T-cell (primary cell): ENCODE measurements at regions of chr9 and their contacts with region 1.

Region 1: DNA sequence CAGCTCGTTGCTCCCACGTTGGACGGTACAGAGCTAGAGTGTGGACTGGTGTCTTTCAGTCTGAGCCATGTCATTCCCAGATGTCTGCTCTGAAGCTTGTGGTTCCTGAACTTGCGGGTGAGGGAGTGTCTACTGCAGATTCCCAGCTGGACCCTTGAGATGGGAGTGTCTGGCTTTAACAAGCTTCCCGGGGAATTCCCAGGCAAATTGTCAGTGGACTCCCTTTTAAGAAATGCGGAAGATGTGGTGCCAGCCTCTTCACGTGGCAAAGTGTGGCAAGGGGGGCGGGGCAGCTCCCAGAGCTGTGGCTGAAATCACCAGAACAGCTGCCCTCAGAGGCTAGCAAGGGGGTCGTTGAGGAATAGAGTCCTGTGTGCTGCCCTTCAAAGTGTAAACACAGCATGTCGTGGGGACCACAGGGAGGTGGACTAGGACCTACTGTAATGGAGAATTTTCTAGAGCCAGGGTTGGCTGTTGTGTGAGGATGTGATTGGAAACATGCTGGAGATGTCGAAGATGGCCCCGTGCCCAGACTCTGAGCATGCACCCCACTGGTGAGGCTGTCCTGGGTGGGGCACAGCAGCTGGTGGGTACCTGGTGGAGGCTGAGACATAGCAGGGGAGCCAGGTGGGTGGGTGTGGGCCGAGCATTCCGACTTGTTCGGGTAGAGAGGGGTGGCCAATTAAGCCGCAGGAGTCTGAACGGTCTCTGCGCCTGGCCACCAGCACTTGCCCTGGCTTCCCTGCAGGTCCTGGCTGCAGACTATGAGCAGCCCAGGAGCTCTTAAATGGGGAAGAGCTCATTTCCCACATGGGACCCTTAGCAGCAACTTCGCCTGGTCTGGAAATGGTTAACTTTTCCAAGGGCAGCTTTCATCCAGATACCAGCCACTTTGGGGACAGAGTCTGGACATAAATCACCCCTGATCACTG is 37.4 kb downstream of the PRRX2 start:
- DNase-seq: no peak
- ATAC-seq: no peak
- H3K4me3 ChIP-seq: no peak overlapping the region
- H3K4me3 Mint-ChIP-seq: no peak overlapping the region
- H3K27ac ChIP-seq: no peak overlapping the region
- H3K27ac Mint-ChIP-seq: no peak overlapping the region
- H3K4me1 ChIP-seq: peaks cover 0 to 4% of the 10 kb centered on the region in 2 experiments
- H3K4me1 Mint-ChIP-seq: peaks cover 0 to 2% (median 0%) of the 10 kb centered on the region in 3 donors
- H3K27me3 ChIP-seq: peaks cover 2 to 36% of the 10 kb centered on the region in 2 experiments
- H3K27me3 Mint-ChIP-seq: peaks cover 15 to 38% of the 10 kb centered on the region in 2 donors

Region 2: DNA sequence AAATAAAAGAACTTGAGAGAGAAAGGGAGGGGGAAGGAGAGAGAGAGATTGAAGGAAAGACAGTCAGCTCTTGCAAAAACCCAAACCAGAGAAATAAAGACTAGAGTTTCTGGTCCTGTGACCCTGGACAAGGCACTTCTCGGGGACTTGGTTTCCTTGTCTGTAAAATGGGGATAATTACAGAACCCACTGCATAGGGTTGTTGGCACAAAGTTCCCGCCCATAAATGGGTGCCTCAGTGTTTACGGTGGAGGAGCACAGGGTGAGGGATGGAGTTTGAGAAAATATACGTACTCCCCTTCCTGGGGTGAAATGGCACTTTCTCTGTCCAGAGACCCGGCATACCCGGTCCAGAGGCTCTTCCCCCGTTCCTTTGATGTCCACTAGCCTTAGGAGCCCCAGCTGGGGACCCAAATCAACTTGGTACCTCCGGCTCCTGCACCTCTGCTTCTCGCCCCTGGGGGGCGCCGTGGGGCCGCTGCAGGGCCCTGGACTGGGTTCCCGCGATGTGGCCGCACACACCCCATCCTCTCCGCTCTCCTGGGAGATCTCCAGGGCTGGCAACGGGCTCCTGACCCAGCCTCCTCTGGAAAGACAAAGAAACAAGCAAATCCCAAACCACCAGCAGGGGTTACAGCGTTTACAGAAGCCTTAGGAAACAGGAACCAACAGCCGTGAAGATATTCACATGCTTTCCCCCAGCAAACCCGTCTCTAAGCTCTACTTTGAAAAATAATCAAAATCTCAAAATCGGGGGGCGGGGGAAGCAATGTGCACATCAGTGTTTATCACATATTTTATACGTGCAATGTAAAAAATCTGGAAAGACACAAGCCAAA is 23.7 kb after region 1 on chr9:
- CTCF ChIA-PET with region 1: no interaction called
- POLR2A ChIA-PET with region 1: interaction called, 4 to 12 read pairs
- DNase-seq: peak; percentile 7 to 71 (median 39)
- ATAC-seq: peak; percentile 87 to 91 (median 90)
- H3K4me3 ChIP-seq: no peak overlapping the region
- H3K4me3 Mint-ChIP-seq: peak overlapping the region in 2 of 3 donors; percentile 31 to 41
- H3K27ac ChIP-seq: no peak overlapping the region
- H3K27ac Mint-ChIP-seq: no peak overlapping the region
- H3K4me1 ChIP-seq: peaks cover 0 to 5% of the 10 kb centered on the region in 2 experiments
- H3K4me1 Mint-ChIP-seq: peaks cover 0 to 5% (median 3%) of the 10 kb centered on the region in 3 donors
- H3K27me3 ChIP-seq: peaks cover 0 to 49% of the 10 kb centered on the region in 2 experiments
- H3K27me3 Mint-ChIP-seq: peaks cover 6 to 28% of the 10 kb centered on the region in 2 donors

Region 3: DNA sequence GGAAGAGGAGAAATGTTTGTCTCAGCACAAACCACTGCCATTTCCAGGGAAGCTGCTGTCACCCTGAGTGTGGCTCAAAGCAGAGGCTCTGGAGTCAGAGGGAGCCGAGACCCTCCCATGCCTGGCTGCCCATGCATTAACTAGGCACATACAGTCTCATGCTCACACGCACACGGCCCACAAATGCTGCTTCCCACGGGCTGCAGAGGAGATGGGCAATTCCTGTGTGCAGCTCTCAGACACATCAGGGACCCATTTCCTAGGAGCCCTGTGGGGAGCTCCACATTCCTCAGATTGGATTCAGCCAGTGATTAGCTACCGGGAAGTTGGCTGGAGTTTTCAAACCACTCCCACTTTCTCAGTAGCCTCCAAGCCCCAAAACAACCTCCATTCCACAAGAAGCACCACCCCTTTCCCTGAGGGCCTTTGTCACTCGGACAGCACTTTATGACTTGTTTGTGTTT is 59.1 kb after region 1 on chr9:
- CTCF ChIA-PET with region 1: interaction called in 1 of 2 experiments, 10 read pairs
- POLR2A ChIA-PET with region 1: no interaction called
- DNase-seq: no peak
- ATAC-seq: no peak
- H3K4me3 ChIP-seq: no peak overlapping the region
- H3K4me3 Mint-ChIP-seq: no peak overlapping the region
- H3K27ac ChIP-seq: no peak overlapping the region
- H3K27ac Mint-ChIP-seq: no peak overlapping the region
- H3K4me1 ChIP-seq: peaks cover 0 to 7% of the 10 kb centered on the region in 2 experiments
- H3K4me1 Mint-ChIP-seq: peaks cover 10 to 11% (median 11%) of the 10 kb centered on the region in 3 donors
- H3K27me3 ChIP-seq: peaks cover 0 to 9% of the 10 kb centered on the region in 2 experiments
- H3K27me3 Mint-ChIP-seq: peaks cover 0 to 6% of the 10 kb centered on the region in 2 donors